Natural killer cell (primary cell): ENCODE measurements at regions of chr11 and their contacts with region 1.

Region 1: GRCh38 chr11:119356349-119357031 is 10.0 kb upstream of the MFRP start:
- DNase-seq: peak; percentile 71 to 87
- ATAC-seq: peak; percentile 92 to 95 (median 92)
- H3K4me3 ChIP-seq: peak overlapping the region; percentile 44
- H3K4me3 Mint-ChIP-seq: peak overlapping the region; percentile 94
- H3K27ac ChIP-seq: no peak overlapping the region
- H3K27ac Mint-ChIP-seq: peak overlapping the region in 1 of 2 donors; percentile 88
- H3K4me1 ChIP-seq: peaks cover 9% of the 10 kb centered on the region
- H3K4me1 Mint-ChIP-seq: peaks cover 10 to 11% of the 10 kb centered on the region in 2 donors
- H3K27me3 ChIP-seq: peaks cover 12% of the 10 kb centered on the region
- H3K27me3 Mint-ChIP-seq: peaks cover 49 to 55% of the 10 kb centered on the region in 2 donors
- CTCF ChIP-seq: peak; percentile 100

Region 2: DNA sequence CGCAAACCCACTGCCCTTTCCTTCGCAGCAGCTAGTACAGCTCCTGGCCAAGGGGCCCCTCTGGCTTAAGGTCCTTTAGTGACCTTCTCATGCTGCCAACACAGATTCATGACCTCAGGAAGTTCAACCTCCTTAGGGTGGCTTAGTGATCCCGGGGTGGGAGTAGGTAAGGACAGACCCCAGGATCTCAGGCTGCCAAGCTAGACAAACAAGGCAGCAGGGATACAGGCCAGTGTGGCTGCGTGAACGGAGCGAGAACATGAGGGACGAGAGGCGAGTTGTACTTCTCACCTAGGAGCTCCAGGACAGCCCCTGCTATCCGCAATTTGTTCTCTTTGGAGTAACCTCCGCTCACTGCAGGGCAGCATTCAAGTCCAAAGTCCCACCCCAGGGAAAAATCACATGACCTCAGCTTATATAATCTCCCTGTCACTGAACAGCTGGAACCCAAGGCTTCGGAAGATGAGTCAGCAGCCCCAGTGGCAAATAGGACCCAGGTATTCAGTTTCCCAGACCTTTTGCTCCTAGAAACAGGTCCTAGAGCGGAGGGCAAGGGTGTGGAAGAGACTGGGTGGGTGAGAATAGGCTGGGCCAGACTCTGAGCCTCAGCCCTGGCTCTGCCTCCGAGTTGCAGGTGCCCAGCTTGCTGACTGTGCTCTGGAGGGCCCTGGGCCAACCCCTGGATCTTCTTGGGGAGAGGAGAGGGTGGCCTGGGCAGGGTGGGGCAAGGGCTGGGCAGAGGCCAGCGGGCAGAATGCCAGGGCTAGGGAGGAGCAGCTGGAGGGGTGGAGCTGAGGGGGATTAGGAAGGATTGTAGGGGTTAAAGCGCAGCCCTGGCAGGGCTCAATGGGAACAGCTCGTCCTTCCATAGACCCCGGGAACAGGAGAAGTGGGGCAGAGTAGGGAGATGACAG is 11.9 kb after region 1 on chr11:
- intact Hi-C with region 1: no loop called
- DNase-seq: no peak
- ATAC-seq: no peak
- H3K4me3 ChIP-seq: no peak overlapping the region
- H3K4me3 Mint-ChIP-seq: no peak overlapping the region
- H3K27ac ChIP-seq: no peak overlapping the region
- H3K27ac Mint-ChIP-seq: no peak overlapping the region
- H3K4me1 ChIP-seq: peaks cover 12% of the 10 kb centered on the region
- H3K4me1 Mint-ChIP-seq: peaks cover 7% of the 10 kb centered on the region in 2 donors
- H3K27me3 ChIP-seq: peaks cover 17% of the 10 kb centered on the region
- H3K27me3 Mint-ChIP-seq: peaks cover 41 to 49% of the 10 kb centered on the region in 2 donors
- CTCF ChIP-seq: no peak

Region 3: DNA sequence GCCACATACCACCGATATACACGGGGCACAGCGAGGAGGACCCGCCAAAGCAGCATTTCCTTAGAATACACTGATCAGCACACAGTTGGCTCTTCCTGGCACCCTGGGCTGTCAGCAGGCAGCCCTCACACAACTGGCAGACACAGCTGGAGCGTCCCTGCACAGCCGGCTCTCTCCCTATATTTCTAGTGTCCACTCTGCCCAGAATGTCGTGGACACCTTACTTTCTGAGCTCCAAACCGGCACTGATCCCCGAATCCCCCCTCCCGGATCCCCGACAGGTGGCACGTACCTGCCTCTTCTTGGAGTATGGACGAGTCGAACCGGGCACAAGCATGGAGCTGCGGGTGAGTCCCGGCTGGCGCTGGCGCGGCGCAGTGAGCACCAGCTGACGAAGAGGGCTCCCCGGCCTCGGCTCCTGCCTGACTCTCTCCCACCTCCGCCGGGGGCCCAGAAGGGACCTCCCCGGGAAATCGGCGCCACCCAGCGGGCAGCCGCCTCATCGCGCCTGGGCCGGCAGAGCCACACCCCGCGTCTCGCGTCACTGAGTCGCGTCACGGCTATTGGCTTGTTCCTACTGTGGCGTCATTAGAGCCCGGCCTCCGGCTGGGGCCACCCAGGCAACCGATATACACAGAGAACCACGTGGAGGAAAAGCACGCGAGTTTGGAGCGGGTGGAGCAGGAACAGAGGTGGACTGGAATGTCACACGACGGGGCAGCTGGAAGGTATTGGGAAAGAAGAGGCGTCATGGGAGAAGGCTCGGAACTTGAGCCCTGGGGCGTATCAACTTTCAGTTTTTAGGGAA is 24.9 kb after region 1 on chr11 and contains the start of gene USP2:
- intact Hi-C with region 1: loop called (anchors 1 kb)
- DNase-seq: peak; percentile 98
- ATAC-seq: peak; percentile 97 to 99 (median 98)
- H3K4me3 ChIP-seq: peak within 1 kb of the TSS; percentile 39
- H3K4me3 Mint-ChIP-seq: no peak within 1 kb of the TSS
- H3K27ac ChIP-seq: no peak within 1 kb of the TSS
- H3K27ac Mint-ChIP-seq: no peak within 1 kb of the TSS
- H3K4me1 ChIP-seq: peaks cover 18% of the 10 kb centered on the region
- H3K4me1 Mint-ChIP-seq: no peaks in the 10 kb centered on the region
- H3K27me3 ChIP-seq: peaks cover 6% of the 10 kb centered on the region
- H3K27me3 Mint-ChIP-seq: peaks cover 0 to 6% of the 10 kb centered on the region in 2 donors
- CTCF ChIP-seq: peak; percentile 80
- total RNA-seq, gene USP2: 0.50 to 3.9 TPM in 2 of 3 donors, not detected in the other

Region 4: DNA sequence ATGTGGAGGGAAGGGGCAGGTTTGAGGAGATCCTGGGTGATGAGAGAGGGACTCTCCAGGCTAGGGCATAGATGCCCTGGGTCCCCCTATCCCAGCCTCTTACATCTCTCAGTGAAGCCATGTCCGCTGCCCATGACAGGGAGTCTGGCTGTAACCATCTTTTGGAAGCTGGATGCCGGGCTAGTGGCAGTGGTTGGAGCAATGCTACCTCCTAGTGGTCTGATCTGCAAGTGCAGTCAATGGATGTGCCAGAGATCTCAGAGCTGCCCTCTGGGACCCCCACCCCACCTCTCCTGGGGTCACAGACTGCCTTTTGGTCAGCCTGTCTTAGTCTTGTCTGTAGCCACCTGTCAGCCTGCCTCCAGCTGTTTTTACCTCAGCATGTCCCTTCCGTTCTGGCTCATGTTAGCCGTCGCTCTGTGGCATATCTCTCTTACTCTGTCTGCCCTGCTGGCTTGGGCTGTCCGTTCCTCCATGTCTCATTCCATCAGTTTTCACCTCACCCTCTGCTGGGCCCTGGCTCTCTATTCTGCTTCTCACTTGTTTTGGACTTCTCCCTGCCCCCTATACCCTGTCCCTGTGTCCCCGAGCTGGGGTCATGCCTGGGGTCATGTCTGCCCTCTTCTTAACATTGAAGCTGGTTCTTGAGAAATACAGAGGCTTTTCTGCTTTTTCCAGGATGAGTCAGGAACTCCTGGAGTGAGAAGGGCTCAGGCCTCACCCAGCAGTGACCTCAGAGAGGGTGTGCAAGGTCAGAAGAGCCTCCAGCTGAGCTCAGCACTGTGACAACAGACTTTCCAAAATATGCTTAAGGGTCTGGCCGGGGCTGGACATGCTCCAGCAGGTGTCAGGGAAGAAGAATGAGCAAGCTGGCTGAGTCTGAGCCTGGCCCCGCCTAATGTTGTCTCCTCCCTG is 118.4 kb after region 1 on chr11:
- intact Hi-C with region 1: loop called (anchors 1 kb)
- DNase-seq: peak; percentile 47 to 75
- ATAC-seq: peak; percentile 57 to 84 (median 81)
- H3K4me3 ChIP-seq: no peak overlapping the region
- H3K4me3 Mint-ChIP-seq: no peak overlapping the region
- H3K27ac ChIP-seq: no peak overlapping the region
- H3K27ac Mint-ChIP-seq: no peak overlapping the region
- H3K4me1 ChIP-seq: no peaks in the 10 kb centered on the region
- H3K4me1 Mint-ChIP-seq: peaks cover 0 to 5% of the 10 kb centered on the region in 2 donors
- H3K27me3 ChIP-seq: no peaks in the 10 kb centered on the region
- H3K27me3 Mint-ChIP-seq: peaks cover 33 to 49% of the 10 kb centered on the region in 2 donors
- CTCF ChIP-seq: peak; percentile 80